ENCODE measurements at regions of chr17 and their contacts with region 1.

Region 1: DNA sequence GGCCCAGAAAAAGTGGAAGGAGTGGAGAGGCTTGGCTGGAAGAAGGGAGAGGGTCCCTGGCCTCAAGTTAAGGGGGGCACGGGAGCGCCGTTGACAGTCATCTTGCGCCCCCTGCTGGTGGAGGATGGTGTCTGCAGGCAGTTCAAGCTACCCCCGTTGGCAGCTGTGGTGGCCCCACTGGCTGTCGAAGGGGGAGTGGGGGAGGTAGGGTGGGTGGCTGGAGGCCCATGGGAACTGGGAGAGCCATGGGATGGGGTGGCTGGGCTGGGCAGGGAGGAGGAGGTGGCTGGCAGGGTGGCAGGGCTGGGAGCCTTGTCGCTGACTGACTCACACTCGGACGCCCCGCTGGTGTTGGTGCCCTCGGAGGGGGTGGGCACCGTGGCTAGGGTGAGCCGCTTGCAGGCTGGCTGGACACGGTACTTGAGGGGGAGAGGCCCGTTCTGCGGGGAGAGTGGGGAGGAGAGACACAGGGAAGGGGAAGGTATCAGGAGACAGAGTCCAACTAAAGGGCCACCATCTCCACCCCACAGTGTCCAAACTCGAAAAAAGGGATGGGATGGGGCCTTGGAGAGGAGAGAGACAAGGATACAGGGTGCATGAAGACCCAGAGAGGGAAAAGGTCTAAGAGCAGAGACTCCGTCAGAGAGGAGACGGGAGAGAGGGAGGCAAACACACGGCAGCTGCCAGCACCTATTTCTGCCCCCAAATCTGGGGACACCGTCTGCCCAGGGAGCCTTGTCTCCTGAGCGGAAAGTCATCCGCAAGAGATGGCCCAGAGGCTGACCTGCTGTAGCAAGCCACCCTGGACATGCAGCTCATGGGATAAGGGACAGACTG is 5.2 kb downstream of the CISD3 start:
- DNase-seq: peak; percentile 92
- H3K4me3 ChIP-seq: no peak overlapping the region; a peak in 2 of 4 replicates
- H3K27ac ChIP-seq: peak overlapping the region in 1 of 2 experiments; percentile 71; a peak in 3 of 4 replicates
- H3K4me1 ChIP-seq: peaks cover 8 to 58% of the 10 kb centered on the region in 2 experiments; a peak in 1 of 4 replicates
- H3K27me3 ChIP-seq: no peaks in the 10 kb centered on the region
- CTCF ChIP-seq: peak; percentile 95
- EP300 ChIP-seq: no peak
- RAD21 ChIP-seq: peak; percentile 75

Region 2: GRCh38 chr17:38504216-38504615 is 231.2 kb before region 1 on chr17:
- CTCF ChIA-PET with region 1: no interaction called
- POLR2A ChIA-PET with region 1: no interaction called
- DNase-seq: no peak
- H3K4me3 ChIP-seq: no peak overlapping the region
- H3K27ac ChIP-seq: no peak overlapping the region
- H3K4me1 ChIP-seq: no peaks in the 10 kb centered on the region; a peak in 1 of 4 replicates
- H3K27me3 ChIP-seq: no peaks in the 10 kb centered on the region
- CTCF ChIP-seq: no peak
- EP300 ChIP-seq: no peak
- RAD21 ChIP-seq: no peak

Region 3: GRCh38 chr17:38693700-38694329 is 41.6 kb before region 1 on chr17:
- CTCF ChIA-PET with region 1: interaction called, 48 read pairs
- POLR2A ChIA-PET with region 1: no interaction called
- DNase-seq: peak; percentile 78
- H3K4me3 ChIP-seq: no peak overlapping the region
- H3K27ac ChIP-seq: peak overlapping the region; percentile 35 to 91; a peak in 3 of 4 replicates
- H3K4me1 ChIP-seq: peaks cover 9 to 15% of the 10 kb centered on the region in 2 experiments; a peak in 2 of 4 replicates
- H3K27me3 ChIP-seq: no peaks in the 10 kb centered on the region
- CTCF ChIP-seq: no peak
- EP300 ChIP-seq: no peak
- RAD21 ChIP-seq: no peak

Region 4: GRCh38 chr17:38702166-38702899 is 33.0 kb before region 1 on chr17:
- CTCF ChIA-PET with region 1: interaction called, 25 read pairs
- POLR2A ChIA-PET with region 1: interaction called, 5 read pairs
- DNase-seq: peak; percentile 94
- H3K4me3 ChIP-seq: peak overlapping the region; percentile 71 to 81
- H3K27ac ChIP-seq: peak overlapping the region; percentile 71 to 86
- H3K4me1 ChIP-seq: peaks cover 10 to 36% of the 10 kb centered on the region in 2 experiments; a peak in 2 of 4 replicates
- H3K27me3 ChIP-seq: no peaks in the 10 kb centered on the region
- CTCF ChIP-seq: no peak
- EP300 ChIP-seq: peak in 1 of 2 experiments; percentile 26; a peak in 1 of 4 replicates
- RAD21 ChIP-seq: no peak

Region 5: DNA sequence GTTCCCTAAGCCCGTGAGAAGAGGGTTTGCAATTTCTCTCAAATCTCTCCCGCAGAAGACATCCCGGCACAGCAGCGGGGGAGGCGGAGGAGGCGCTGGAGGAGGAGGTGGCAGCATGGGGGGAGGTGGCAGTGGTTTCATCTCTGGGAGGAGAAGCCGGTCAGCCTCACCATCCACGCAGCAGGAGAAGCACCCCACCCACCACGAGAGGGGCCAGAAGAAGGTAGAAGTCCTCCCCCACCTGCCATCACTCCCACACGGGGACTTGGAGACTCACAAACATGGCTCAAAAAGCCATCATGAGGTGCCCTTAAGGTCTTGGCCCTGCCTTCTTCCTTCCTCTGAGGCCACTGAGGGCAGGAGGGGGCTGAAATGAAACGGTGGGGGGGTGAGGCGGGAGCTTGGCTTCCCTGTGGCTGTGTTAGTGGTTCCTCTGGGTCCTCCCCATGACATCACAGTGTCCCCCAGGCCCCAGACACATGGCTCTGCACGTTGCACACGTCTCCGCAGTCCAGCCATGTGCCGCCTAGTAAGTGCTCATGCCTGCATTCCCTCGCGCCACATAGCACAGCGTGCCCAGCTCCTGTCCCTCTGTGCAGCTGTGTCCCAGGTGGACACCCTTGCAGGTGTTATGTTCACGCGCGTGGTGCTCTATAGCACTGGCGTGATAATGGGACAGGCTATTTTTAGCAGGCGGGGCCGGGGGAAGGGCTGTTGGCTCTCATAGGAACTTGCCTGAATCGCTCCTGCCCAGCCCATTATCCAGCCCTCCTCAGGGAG is 23.4 kb before region 1 on chr17:
- CTCF ChIA-PET with region 1: interaction called, 25 read pairs
- POLR2A ChIA-PET with region 1: interaction called, 3 read pairs
- DNase-seq: no peak
- H3K4me3 ChIP-seq: no peak overlapping the region
- H3K27ac ChIP-seq: no peak overlapping the region
- H3K4me1 ChIP-seq: peaks cover 2 to 13% of the 10 kb centered on the region in 2 experiments; a peak in 2 of 4 replicates
- H3K27me3 ChIP-seq: no peaks in the 10 kb centered on the region
- CTCF ChIP-seq: no peak
- EP300 ChIP-seq: no peak
- RAD21 ChIP-seq: no peak

Region 6: GRCh38 chr17:38724337-38724988 is 10.9 kb before region 1 on chr17:
- CTCF ChIA-PET with region 1: interaction called, 36 read pairs
- POLR2A ChIA-PET with region 1: interaction called, 9 read pairs
- DNase-seq: peak; percentile 94
- H3K4me3 ChIP-seq: no peak overlapping the region; a peak in 1 of 4 replicates
- H3K27ac ChIP-seq: peak overlapping the region; percentile 32 to 95; a peak in 3 of 4 replicates
- H3K4me1 ChIP-seq: peaks cover 7 to 41% of the 10 kb centered on the region in 2 experiments; a peak in 1 of 4 replicates
- H3K27me3 ChIP-seq: no peaks in the 10 kb centered on the region
- CTCF ChIP-seq: no peak
- EP300 ChIP-seq: peak in 1 of 2 experiments; percentile 58; a peak in 1 of 4 replicates
- RAD21 ChIP-seq: 0 out of 2 replicates have a peak, but pooled peaks have one; percentile 3

Region 7: GRCh38 chr17:38752119-38752929 is 16.9 kb after region 1 on chr17 and contains the start of gene PSMB3:
- CTCF ChIA-PET with region 1: interaction called, 88 read pairs
- POLR2A ChIA-PET with region 1: interaction called, 3 read pairs
- DNase-seq: peak; percentile 91
- H3K4me3 ChIP-seq: peak within 1 kb of the TSS; percentile 91 to 93
- H3K27ac ChIP-seq: peak within 1 kb of the TSS; percentile 74 to 98
- H3K4me1 ChIP-seq: peaks cover 0 to 20% of the 10 kb centered on the region in 2 experiments; a peak in 1 of 4 replicates
- H3K27me3 ChIP-seq: no peaks in the 10 kb centered on the region
- CTCF ChIP-seq: no peak
- EP300 ChIP-seq: no peak
- RAD21 ChIP-seq: no peak
- polyA plus RNA-seq, gene PSMB3: 480 and 533 TPM in 2 replicates